ENCODE measurements at regions of chr18 and their contacts with region 1.

Region 1: DNA sequence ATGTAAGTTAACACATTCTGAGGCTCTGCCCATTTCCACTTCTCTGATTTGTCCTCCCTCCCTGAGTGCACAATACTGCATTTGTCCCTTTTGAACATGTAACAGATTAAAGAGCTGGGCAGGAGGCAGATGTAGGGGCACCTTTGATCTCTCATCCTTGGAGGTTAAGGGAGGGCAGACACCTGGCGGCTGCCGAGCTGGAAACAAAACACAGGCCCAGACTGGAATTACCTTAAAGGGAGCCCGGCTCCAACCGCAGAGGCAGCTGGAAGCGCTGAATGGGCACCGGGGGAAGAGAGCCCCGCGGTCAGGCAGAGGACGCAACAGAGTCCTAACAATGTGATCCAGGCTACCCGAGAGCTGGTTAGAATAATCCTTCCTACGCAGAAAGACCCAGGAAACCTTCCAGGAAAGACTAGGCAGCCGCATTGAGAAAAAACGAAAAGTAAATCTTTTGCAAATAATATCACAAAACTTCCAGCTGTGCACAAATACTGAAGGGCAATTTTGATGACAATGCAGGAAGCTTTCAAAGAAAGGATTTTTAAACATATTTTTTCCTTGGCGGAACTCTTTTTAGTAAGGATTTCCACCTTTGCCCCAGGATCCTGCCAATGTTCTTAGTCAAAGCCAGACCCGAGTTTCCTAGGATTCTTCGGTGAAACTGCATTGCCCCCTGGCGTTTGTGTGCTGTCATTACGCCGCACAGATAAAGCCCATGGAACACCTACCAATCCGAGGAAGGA is 216.0 kb downstream of the TGIF1 start:
- DNase-seq: peak; percentile 45
- H3K4me3 ChIP-seq: peak overlapping the region; percentile 15; the same call in 1 of the 2 replicates
- CTCF ChIP-seq: peak; percentile 86

Region 2: DNA sequence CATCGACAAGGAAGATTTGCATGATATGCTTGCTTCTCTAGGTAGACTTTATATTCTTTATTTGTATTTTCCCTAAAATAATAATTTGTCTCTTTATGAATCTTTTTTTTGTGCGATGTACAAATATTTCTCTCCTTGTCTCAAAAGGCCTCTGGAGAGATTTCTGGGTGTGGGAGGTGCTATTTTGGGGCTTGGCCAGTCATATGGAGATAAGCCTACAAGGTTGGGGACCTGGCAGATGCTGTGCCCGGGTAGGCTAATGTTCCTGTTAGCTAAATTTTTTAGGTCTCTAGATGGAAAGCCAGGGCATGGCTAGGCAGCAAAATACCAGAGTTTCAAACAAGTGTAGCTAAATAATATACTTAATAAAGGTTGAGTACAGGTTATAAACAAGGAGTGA is 392.9 kb before region 1 on chr18:
- CTCF ChIA-PET with region 1: interaction called, 16 read pairs
- POLR2A ChIA-PET with region 1: no interaction called
- DNase-seq: no peak
- H3K4me3 ChIP-seq: no peak overlapping the region
- CTCF ChIP-seq: no peak

Region 3: GRCh38 chr18:3441290-3441689 is 224.7 kb before region 1 on chr18:
- CTCF ChIA-PET with region 1: interaction called, 14 read pairs
- POLR2A ChIA-PET with region 1: no interaction called
- DNase-seq: no peak
- H3K4me3 ChIP-seq: no peak overlapping the region
- CTCF ChIP-seq: peak; percentile 18

Region 4: DNA sequence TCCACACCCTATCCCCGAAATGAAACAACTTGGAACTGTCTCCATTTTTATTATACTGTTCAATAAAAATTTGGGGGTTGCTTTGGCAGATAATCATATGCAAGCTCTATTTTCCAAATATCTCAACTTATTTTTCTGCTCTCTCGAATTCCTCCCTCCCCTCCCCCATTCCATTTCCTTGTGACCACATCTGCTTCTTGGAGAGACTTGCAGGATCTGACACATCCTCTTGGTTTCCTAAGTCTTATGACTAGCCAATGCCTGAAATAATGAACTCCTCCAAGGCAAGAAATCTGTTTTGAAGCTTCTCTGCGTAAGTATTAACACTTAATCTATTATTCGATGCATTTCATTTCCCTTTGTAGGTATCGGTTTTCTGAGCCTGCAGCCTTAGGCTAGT is 199.9 kb before region 1 on chr18:
- CTCF ChIA-PET with region 1: interaction called, 34 read pairs
- POLR2A ChIA-PET with region 1: no interaction called
- DNase-seq: no peak
- H3K4me3 ChIP-seq: no peak overlapping the region
- CTCF ChIP-seq: no peak

Region 5: GRCh38 chr18:3604498-3605408 is 61.2 kb before region 1 on chr18:
- CTCF ChIA-PET with region 1: interaction called, 34 read pairs
- POLR2A ChIA-PET with region 1: interaction called, 3 read pairs
- DNase-seq: peak; percentile 98
- H3K4me3 ChIP-seq: peak overlapping the region; percentile 56
- CTCF ChIP-seq: no peak

Region 6: GRCh38 chr18:3634250-3634939 is 31.6 kb before region 1 on chr18:
- CTCF ChIA-PET with region 1: interaction called, 11 read pairs
- POLR2A ChIA-PET with region 1: no interaction called
- DNase-seq: no peak
- H3K4me3 ChIP-seq: no peak overlapping the region
- CTCF ChIP-seq: no peak

Region 7: DNA sequence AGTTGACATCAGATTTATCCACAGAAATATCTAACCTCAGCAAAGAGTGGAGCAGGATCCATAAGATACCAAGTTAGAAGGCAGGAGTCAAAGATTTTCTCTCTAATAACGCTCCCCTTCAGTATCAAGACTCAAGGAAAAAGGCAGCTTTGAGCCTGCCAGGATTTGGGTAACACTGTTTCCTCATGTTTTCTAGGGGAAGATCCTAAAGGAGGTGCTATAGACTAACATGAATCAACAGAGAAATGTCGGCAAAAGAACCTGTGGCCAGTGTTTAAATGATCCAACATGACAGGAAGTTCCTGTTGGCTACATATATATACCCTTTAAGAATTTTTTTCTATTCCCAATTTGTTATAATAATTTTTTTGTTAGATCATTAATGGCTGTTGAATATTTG is 186.4 kb after region 1 on chr18:
- CTCF ChIA-PET with region 1: no interaction called
- POLR2A ChIA-PET with region 1: no interaction called
- DNase-seq: no peak
- H3K4me3 ChIP-seq: no peak overlapping the region
- CTCF ChIP-seq: no peak

Region 8: GRCh38 chr18:3869848-3870247 is 203.9 kb after region 1 on chr18:
- CTCF ChIA-PET with region 1: interaction called, 18 read pairs
- POLR2A ChIA-PET with region 1: no interaction called
- DNase-seq: no peak
- H3K4me3 ChIP-seq: no peak overlapping the region
- CTCF ChIP-seq: peak; percentile 28